ENCODE measurements at regions of chr13 and their contacts with region 1.

Region 1: DNA sequence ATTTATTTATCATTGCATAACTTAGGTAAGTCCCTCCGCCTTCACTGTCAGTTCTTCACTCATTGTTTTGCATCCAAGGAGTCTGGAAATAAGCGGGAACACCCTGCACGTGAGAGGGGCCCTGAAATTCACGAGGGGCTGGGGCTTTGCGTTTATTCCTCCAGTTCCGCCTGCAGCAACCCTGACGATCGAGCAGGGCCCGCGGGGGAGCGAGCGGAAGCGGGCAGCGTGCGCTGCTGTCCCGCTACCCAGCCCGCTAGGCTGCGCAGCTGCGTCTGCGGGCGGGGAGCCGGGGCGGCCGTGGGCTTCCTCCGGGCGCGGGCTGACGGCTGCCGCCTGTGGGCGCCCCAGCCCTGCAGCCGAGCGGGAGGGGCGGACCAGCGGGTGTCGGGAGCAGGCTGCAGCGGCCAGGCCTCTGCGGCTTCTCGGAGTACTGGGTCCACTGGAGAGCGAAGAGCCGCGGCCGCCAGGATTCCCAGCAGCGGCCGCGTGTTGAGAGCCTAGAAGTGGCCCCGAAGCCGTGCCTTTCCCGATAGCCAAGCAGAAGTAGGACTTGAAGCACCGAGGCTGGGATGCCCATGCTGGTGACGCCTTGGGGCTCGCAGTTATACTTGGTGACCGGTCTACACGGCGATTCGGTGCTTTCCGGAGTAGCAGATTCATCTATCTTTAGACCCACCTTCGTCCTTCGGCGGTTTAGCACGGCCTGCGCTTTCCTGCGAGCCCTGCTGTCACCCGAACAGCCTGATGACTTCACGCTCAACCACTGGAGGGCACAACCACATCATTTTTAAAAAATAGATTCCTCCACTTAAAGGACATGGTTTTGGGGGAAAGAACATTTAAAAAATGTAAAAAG is 32.9 kb upstream of the SACS start:
- DNase-seq: peak; percentile 64
- H3K4me3 ChIP-seq: peak overlapping the region; percentile 75
- H3K27ac ChIP-seq: peak overlapping the region; percentile 92
- H3K4me1 ChIP-seq: peaks cover 29% of the 10 kb centered on the region
- H3K27me3 ChIP-seq: no peaks in the 10 kb centered on the region
- CTCF ChIP-seq: peak; percentile 72

Region 2: GRCh38 chr13:23570099-23570920 is 103.9 kb after region 1 on chr13 and contains the start of gene TNFRSF19:
- intact Hi-C with region 1: loop called (anchors 5 kb)
- DNase-seq: peak; percentile 45
- H3K4me3 ChIP-seq: peak within 1 kb of the TSS; percentile 67
- H3K27ac ChIP-seq: peak within 1 kb of the TSS; percentile 84
- H3K4me1 ChIP-seq: peaks cover 19% of the 10 kb centered on the region
- H3K27me3 ChIP-seq: no peaks in the 10 kb centered on the region
- CTCF ChIP-seq: no peak
- total RNA-seq, gene TNFRSF19: 25.9 TPM

Region 3: GRCh38 chr13:23871616-23872220 is 405.3 kb after region 1 on chr13:
- intact Hi-C with region 1: loop called (anchors 1 kb)
- DNase-seq: no peak
- H3K4me3 ChIP-seq: no peak overlapping the region
- H3K27ac ChIP-seq: no peak overlapping the region
- H3K4me1 ChIP-seq: no peaks in the 10 kb centered on the region
- H3K27me3 ChIP-seq: no peaks in the 10 kb centered on the region
- CTCF ChIP-seq: peak; percentile 73

Measured in left ventricle myocardium inferior (tissue), 1 donor.